CD8-positive, alpha-beta T cell (primary cell): ENCODE measurements at regions of chr2 and their contacts with region 1.

Region 1: GRCh38 chr2:4024605-4025004 is 321.2 kb downstream of the DCDC2C start:
- DNase-seq: no peak
- ATAC-seq: no peak
- H3K4me3 ChIP-seq: no peak overlapping the region
- H3K4me3 Mint-ChIP-seq: no peak overlapping the region
- H3K27ac ChIP-seq: no peak overlapping the region
- H3K27ac Mint-ChIP-seq: no peak overlapping the region
- H3K4me1 ChIP-seq: no peaks in the 10 kb centered on the region
- H3K4me1 Mint-ChIP-seq: no peaks in the 10 kb centered on the region
- H3K27me3 ChIP-seq: no peaks in the 10 kb centered on the region
- H3K27me3 Mint-ChIP-seq: no peaks in the 10 kb centered on the region
- CTCF ChIP-seq: no peak

Region 2: GRCh38 chr2:3610881-3611505 is 413.6 kb before region 1 on chr2:
- CTCF ChIA-PET with region 1: no interaction called
- POLR2A ChIA-PET with region 1: no interaction called
- intact Hi-C with region 1: no loop called
- DNase-seq: peak in 1 of 9 experiments; percentile 29
- ATAC-seq: no peak
- H3K4me3 ChIP-seq: no peak overlapping the region
- H3K4me3 Mint-ChIP-seq: no peak overlapping the region
- H3K27ac ChIP-seq: no peak overlapping the region
- H3K27ac Mint-ChIP-seq: no peak overlapping the region
- H3K4me1 ChIP-seq: peaks cover 3% of the 10 kb centered on the region
- H3K4me1 Mint-ChIP-seq: peaks cover 4% of the 10 kb centered on the region
- H3K27me3 ChIP-seq: no peaks in the 10 kb centered on the region
- H3K27me3 Mint-ChIP-seq: no peaks in the 10 kb centered on the region
- CTCF ChIP-seq: no peak

Region 3: DNA sequence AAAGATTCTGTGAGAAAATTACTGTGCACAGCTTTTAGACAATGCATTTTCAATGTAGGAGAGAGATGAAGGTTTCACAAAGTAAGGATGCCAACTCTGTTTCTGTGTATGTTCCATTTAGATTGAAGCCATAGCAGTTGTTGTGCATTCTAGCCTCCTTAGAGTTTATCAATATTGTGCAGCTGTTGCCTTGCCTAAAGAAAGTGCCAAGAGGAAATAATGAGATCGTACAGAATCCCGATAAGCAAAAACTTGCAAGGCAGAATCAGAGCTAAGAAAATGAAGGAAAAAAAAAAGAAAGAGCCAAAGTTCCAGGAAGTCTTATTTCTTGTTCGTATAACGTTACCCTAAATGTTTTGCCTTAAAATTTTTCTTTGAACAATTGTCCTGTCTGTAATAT is 643.8 kb after region 1 on chr2:
- CTCF ChIA-PET with region 1: no interaction called
- POLR2A ChIA-PET with region 1: no interaction called
- intact Hi-C with region 1: loop called in 1 of 2 experiments (anchors 5 kb)
- DNase-seq: no peak
- ATAC-seq: no peak
- H3K4me3 ChIP-seq: no peak overlapping the region
- H3K4me3 Mint-ChIP-seq: no peak overlapping the region
- H3K27ac ChIP-seq: no peak overlapping the region
- H3K27ac Mint-ChIP-seq: no peak overlapping the region
- H3K4me1 ChIP-seq: no peaks in the 10 kb centered on the region
- H3K4me1 Mint-ChIP-seq: no peaks in the 10 kb centered on the region
- H3K27me3 ChIP-seq: no peaks in the 10 kb centered on the region
- H3K27me3 Mint-ChIP-seq: no peaks in the 10 kb centered on the region
- CTCF ChIP-seq: no peak